ENCODE measurements at regions of chr2 and their contacts with region 1.

Region 1: DNA sequence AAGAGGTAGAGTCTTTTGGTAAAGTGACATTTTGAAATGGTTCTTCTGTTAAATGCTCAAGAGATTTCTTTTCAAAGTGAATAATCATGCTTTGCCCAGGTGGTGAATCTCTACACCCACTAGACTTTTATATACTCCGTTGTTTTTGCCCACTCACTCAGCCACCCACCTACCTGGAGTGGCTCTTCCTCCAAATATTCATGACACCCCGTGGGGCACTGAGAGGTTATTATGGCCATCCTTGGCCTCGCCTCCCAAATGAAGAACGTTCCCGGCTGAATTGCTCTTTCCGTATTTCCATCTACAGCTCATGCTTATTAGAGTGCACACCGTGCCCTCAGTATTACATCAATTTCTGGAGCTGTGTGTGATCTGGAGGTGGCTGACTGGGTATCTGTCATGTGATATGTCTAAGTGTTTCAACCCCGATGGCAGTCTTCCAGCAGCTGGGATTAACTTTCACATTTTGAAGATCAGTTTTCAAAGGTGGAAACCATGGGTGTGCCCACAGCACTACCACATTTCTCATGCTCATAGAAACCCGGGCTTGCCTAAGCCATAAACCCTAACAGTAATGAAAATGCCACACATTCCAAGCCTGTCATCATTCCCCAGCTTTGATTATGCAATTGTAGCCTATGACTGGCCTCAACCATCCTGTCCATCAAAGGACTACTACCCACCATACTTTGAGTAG is 406.6 kb upstream of the MMADHC start:
- DNase-seq: peak; percentile 98
- H3K4me3 Mint-ChIP-seq: peak overlapping the region; percentile 32
- H3K27ac Mint-ChIP-seq: peak overlapping the region; percentile 78
- H3K4me1 Mint-ChIP-seq: peaks cover 29% of the 10 kb centered on the region
- H3K27me3 Mint-ChIP-seq: no peaks in the 10 kb centered on the region
- CTCF ChIP-seq: no peak

Region 2: DNA sequence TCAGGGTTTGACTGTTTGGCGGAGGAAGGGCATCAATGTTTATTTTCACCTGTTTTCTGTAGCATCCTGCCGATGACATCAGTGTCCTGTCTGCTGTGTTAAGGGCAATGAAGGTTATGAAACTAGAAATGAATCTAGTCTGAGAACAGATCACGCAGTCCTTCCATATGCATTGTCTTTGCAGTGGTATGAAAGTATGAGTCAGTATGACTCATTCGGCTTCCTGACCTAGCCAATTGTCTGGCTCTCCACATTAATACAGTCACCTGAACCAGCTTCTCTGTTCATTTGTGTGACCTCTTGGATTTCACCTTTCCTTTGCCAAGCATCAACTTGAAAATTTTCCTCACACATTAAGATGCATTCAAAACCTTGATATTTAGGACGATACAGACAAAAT is 139.4 kb after region 1 on chr2:
- CTCF ChIA-PET with region 1: no interaction called
- POLR2A ChIA-PET with region 1: no interaction called
- intact Hi-C with region 1: loop called (anchors 1 kb)
- DNase-seq: peak; percentile 95
- H3K4me3 Mint-ChIP-seq: no peak overlapping the region
- H3K27ac Mint-ChIP-seq: peak overlapping the region; percentile 5
- H3K4me1 Mint-ChIP-seq: peaks cover 13% of the 10 kb centered on the region
- H3K27me3 Mint-ChIP-seq: no peaks in the 10 kb centered on the region
- CTCF ChIP-seq: no peak

Region 3: DNA sequence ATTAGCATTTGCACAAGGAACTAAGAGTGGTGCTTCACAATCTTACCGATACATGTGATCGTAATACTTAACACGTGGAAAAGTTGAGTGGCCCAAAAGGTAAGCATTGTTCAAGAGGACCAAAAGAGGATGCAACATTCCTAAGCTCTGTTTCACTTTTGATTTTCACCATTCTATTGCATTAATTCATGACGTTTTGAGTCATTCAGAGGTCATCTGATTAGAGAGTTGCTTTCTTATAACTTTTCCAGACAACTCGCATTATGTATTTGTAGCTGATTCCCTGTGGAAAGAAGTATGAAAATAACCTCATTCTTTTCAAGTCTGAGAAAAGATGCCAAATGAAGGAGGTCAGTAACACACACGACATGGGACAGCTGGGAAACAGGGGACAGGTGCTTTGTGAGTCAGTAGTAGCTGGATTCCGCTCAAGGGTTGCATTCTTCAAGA is 148.9 kb after region 1 on chr2:
- CTCF ChIA-PET with region 1: no interaction called
- POLR2A ChIA-PET with region 1: interaction called, 3 read pairs
- intact Hi-C with region 1: loop called (anchors 1 kb)
- DNase-seq: peak; percentile 23
- H3K4me3 Mint-ChIP-seq: no peak overlapping the region
- H3K27ac Mint-ChIP-seq: peak overlapping the region; percentile 95
- H3K4me1 Mint-ChIP-seq: peaks cover 10% of the 10 kb centered on the region
- H3K27me3 Mint-ChIP-seq: no peaks in the 10 kb centered on the region
- CTCF ChIP-seq: no peak

Region 4: DNA sequence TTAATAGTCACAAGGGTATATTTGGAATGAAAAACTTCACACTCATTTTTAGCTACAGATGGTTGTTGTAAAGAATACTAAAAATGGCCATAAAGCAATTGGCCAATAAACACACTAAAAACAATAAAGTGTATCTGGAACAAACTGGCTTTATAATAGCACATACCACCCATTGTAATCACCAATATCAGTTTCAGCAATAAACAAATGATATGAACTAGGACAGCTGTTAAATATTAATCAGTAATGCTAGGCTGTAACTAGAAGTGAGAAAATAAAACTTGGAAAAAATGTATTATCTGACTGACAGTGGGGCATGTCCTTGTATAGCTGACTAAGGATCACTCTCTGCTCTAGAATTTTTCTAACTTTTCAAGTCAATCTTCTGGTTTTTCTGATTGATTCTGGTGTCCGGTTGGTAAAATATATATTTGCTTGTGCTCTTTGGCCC is 180.8 kb after region 1 on chr2:
- CTCF ChIA-PET with region 1: no interaction called
- POLR2A ChIA-PET with region 1: no interaction called
- intact Hi-C with region 1: no loop called
- DNase-seq: no peak
- H3K4me3 Mint-ChIP-seq: no peak overlapping the region
- H3K27ac Mint-ChIP-seq: no peak overlapping the region
- H3K4me1 Mint-ChIP-seq: no peaks in the 10 kb centered on the region
- H3K27me3 Mint-ChIP-seq: no peaks in the 10 kb centered on the region
- CTCF ChIP-seq: no peak